ENCODE measurements at regions of chr11 and their contacts with region 1.

Region 1: GRCh38 chr11:72897506-72897905 is 83.3 kb downstream of the ATG16L2 start:
- DNase-seq: no peak
- ATAC-seq: no peak
- H3K4me3 ChIP-seq: no peak overlapping the region
- H3K27ac ChIP-seq: no peak overlapping the region
- H3K4me1 ChIP-seq: no peaks in the 10 kb centered on the region
- H3K27me3 ChIP-seq: no peaks in the 10 kb centered on the region
- CTCF ChIP-seq: no peak
- POLR2A ChIP-seq: no peak
- RAD21 ChIP-seq: no peak

Region 2: DNA sequence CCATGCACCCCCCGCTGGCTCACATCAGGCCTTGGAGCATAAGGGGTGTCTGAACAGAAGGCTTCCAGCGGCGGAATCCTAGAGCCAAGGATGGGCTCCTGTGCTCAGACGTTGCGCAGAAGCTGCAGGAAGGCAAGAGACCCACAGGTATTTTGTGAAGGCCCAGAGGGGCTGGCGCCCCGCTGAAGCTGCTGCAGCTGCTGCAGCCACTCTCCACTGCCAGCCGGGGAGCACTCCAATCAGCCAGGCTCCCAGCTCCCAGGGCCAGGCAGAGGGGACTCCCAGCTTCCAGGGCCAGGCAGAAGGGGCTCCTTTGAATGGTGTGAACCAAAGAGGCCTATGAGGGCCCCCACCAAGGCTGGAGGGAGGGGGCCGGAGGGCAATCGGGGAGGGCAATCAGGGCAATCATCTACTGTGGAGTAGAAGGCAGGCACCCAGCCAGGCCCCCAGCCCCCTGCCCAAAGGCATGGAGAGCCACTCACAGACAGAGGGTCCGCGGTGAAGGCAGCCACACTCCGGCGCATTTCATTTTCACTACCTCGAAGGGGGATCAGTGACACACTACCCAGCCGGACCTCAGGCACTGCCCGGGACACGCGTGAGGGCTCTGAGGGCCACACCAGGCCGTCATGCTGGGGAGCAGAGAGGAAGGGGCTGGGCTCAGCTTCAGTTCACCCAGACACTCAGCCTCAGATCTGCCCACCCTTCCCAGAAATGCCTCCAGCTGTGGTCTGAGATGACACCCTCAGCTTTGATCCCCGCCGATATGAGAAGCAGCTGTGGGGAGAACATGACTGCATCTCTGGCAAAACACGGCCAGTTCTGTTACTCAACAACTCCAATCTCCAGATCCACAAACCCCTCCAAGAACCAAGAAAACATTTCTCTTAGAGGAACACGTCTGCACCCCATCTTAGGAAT is 211.7 kb before region 1 on chr11:
- CTCF ChIA-PET with region 1: no interaction called
- POLR2A ChIA-PET with region 1: no interaction called
- dilution Hi-C with region 1: no loop called
- in situ Hi-C with region 1: no loop called
- intact Hi-C with region 1: no loop called
- DNase-seq: peak; percentile 19
- ATAC-seq: no peak
- H3K4me3 ChIP-seq: no peak overlapping the region
- H3K27ac ChIP-seq: no peak overlapping the region
- H3K4me1 ChIP-seq: peaks cover 2% of the 10 kb centered on the region; the same call in 1 of the 2 replicates
- H3K27me3 ChIP-seq: no peaks in the 10 kb centered on the region
- CTCF ChIP-seq: no peak
- POLR2A ChIP-seq: no peak
- RAD21 ChIP-seq: no peak

Region 3: GRCh38 chr11:72864702-72865655 is 32.5 kb before region 1 on chr11:
- CTCF ChIA-PET with region 1: no interaction called
- POLR2A ChIA-PET with region 1: no interaction called
- dilution Hi-C with region 1: no loop called
- in situ Hi-C with region 1: no loop called
- intact Hi-C with region 1: loop called (anchors 5 kb)
- DNase-seq: peak; percentile 46
- ATAC-seq: peak; percentile 54
- H3K4me3 ChIP-seq: no peak overlapping the region
- H3K27ac ChIP-seq: no peak overlapping the region
- H3K4me1 ChIP-seq: no peaks in the 10 kb centered on the region; the same call in 1 of the 2 replicates
- H3K27me3 ChIP-seq: no peaks in the 10 kb centered on the region
- CTCF ChIP-seq: no peak
- POLR2A ChIP-seq: no peak
- RAD21 ChIP-seq: no peak